Activated CD4-positive, alpha-beta T cell treated with anti-CD3 and anti-CD28 coated beads, Interleukin-2, amount 10 ng/mL, durations not matched to agents 24 days and 14 days (primary cell): ENCODE measurements at regions of chr17 and their contacts with region 1.

Region 1: GRCh38 chr17:63984651-63985386 is 12.1 kb upstream of the SCN4A start:
- DNase-seq: peak; percentile 88
- H3K4me3 Mint-ChIP-seq: peak overlapping the region; percentile 40
- H3K27ac Mint-ChIP-seq: peak overlapping the region; percentile 85
- H3K4me1 Mint-ChIP-seq: peaks cover 21% of the 10 kb centered on the region
- H3K27me3 Mint-ChIP-seq: peaks cover 4% of the 10 kb centered on the region

Region 2: DNA sequence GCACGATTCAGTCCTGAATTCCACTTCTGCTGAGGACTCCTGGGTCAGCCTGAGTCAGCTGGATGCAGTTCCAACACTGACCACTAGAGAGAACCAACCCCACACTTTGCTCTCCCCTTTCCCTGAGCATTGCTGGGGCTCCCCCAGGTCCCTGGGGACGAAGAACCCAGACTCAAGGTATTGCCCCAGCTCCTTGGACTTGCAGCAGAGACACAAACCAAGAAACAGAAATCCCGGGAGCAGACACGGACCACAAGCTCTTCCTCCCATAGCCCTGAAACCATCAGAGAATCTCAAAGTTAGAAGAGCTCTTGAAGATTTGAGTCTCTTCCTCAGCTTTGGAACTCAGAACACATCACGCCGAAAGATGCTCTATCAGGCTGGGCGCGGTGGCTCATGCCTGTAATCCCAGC is 65.5 kb before region 1 on chr17:
- intact Hi-C with region 1: loop called (anchors 2 kb)
- DNase-seq: peak; percentile 93
- H3K4me3 Mint-ChIP-seq: no peak overlapping the region
- H3K27ac Mint-ChIP-seq: peak overlapping the region; percentile 66
- H3K4me1 Mint-ChIP-seq: peaks cover 9% of the 10 kb centered on the region
- H3K27me3 Mint-ChIP-seq: peaks cover 10% of the 10 kb centered on the region

Region 3: GRCh38 chr17:63931099-63931561 is 53.7 kb before region 1 on chr17:
- intact Hi-C with region 1: loop called (anchors 5 kb)
- DNase-seq: peak; percentile 89
- H3K4me3 Mint-ChIP-seq: peak overlapping the region; percentile 98
- H3K27ac Mint-ChIP-seq: peak overlapping the region; percentile 95
- H3K4me1 Mint-ChIP-seq: peaks cover 18% of the 10 kb centered on the region
- H3K27me3 Mint-ChIP-seq: peaks cover 5% of the 10 kb centered on the region

Region 4: GRCh38 chr17:63946440-63947367 is 38.1 kb before region 1 on chr17:
- intact Hi-C with region 1: loop called (anchors 2 kb)
- DNase-seq: peak; percentile 90
- H3K4me3 Mint-ChIP-seq: peak overlapping the region; percentile 71
- H3K27ac Mint-ChIP-seq: peak overlapping the region; percentile 74
- H3K4me1 Mint-ChIP-seq: peaks cover 11% of the 10 kb centered on the region
- H3K27me3 Mint-ChIP-seq: peaks cover 4% of the 10 kb centered on the region

Region 5: GRCh38 chr17:64020056-64020766 is 35.4 kb after region 1 on chr17 and contains the start of gene ICAM2:
- intact Hi-C with region 1: loop called (anchors 5 kb)
- DNase-seq: peak; percentile 96
- H3K4me3 Mint-ChIP-seq: peak within 1 kb of the TSS; percentile 94
- H3K27ac Mint-ChIP-seq: peak within 1 kb of the TSS; percentile 98
- H3K4me1 Mint-ChIP-seq: peaks cover 66% of the 10 kb centered on the region
- H3K27me3 Mint-ChIP-seq: no peaks in the 10 kb centered on the region
- total RNA-seq, gene ICAM2: 62.2 TPM in 2 replicates

Region 6: GRCh38 chr17:64051153-64051552 is 66.3 kb after region 1 on chr17:
- intact Hi-C with region 1: no loop called
- DNase-seq: peak; percentile 84
- H3K4me3 Mint-ChIP-seq: peak overlapping the region; percentile 58
- H3K27ac Mint-ChIP-seq: peak overlapping the region; percentile 86
- H3K4me1 Mint-ChIP-seq: peaks cover 30% of the 10 kb centered on the region
- H3K27me3 Mint-ChIP-seq: no peaks in the 10 kb centered on the region